Mucosa of descending colon (tissue), 3 donors: ENCODE measurements at regions of chr10 and their contacts with region 1.

Region 1: GRCh38 chr10:93816123-93816747 is 58.5 kb downstream of the LGI1 start:
- DNase-seq: peak; percentile 54 to 84 (median 78)
- ATAC-seq: peak; percentile 74
- H3K4me3 ChIP-seq: no peak overlapping the region
- H3K4me1 ChIP-seq: peaks cover 15% of the 10 kb centered on the region
- CTCF ChIP-seq: peak; percentile 68

Region 2: GRCh38 chr10:93702211-93703001 is 113.8 kb before region 1 on chr10 and contains the start of gene FRA10AC1:
- intact Hi-C with region 1: loop called in 1 of 2 experiments (anchors 10 kb)
- DNase-seq: peak; percentile 94 to 96 (median 96)
- ATAC-seq: peak; percentile 99
- H3K4me3 ChIP-seq: peak within 1 kb of the TSS; percentile 55
- H3K4me1 ChIP-seq: peaks cover 10% of the 10 kb centered on the region
- CTCF ChIP-seq: peak; percentile 21
- total RNA-seq, gene FRA10AC1: 11.4 to 16.8 (median 15.3) TPM